A549 (cell line): ENCODE measurements at regions of chr18 and their contacts with region 1.

Region 1: DNA sequence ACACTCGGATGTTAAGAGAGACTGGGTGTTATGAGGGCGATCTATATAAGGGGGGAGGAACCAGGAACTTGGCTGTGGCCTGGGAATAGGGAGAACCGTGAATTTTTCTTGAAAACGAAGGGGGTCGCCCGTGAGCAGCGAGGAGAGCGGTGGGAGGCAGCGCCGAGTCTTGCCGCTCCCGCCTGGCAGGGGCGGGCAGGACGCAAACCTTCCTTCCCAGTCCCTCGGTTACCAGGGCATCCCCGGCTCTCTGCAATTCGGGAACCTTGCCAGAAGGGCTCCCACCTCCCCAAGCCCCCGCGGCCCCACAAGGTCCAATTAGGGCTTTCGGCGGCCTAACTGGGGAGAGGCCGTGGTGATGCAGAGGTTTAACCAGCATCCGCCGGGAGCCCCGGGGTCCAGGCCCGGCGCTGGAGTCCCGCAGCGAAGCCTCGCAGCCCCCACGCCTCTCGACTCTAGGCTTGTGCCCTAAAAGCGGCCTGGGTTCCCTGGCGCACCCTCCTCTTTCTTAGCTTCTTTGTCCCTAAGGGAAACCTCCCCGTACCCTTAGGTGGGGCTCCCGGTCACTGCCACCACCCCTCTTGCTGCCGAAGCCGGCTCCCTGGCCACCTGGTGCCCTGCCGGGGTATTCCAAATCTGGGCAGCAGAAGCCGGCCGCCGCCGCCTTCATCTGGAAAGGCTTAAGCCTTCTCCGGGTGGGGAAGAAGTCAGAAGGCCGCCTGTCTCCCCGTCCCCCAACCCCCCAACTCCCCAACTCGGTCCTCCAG is 680 bp upstream of the FHOD3 start:
- DNase-seq: peak; percentile 46 to 74
- ATAC-seq: peak; percentile 84 to 90
- H3K4me3 ChIP-seq: peak overlapping the region; percentile 67
- H3K27ac ChIP-seq: peak overlapping the region; percentile 72 to 92
- H3K4me1 ChIP-seq: no peaks in the 10 kb centered on the region
- CTCF ChIP-seq: peak; percentile 46
- EP300 ChIP-seq: no peak
- POLR2A ChIP-seq: no peak
- RAD21 ChIP-seq: peak; percentile 46 to 66

Region 2: GRCh38 chr18:36309436-36310391 is 12.9 kb after region 1 on chr18:
- CTCF ChIA-PET with region 1: no interaction called
- POLR2A ChIA-PET with region 1: interaction called, 10 read pairs
- DNase-seq: peak; percentile 42 to 64
- ATAC-seq: peak; percentile 92 to 93
- H3K4me3 ChIP-seq: no peak overlapping the region
- H3K27ac ChIP-seq: peak overlapping the region; percentile 65 to 81
- H3K4me1 ChIP-seq: peaks cover 15% of the 10 kb centered on the region
- CTCF ChIP-seq: no peak
- EP300 ChIP-seq: peak in 1 of 2 experiments; percentile 21; a peak in 1 of 5 replicates
- POLR2A ChIP-seq: no peak
- RAD21 ChIP-seq: no peak

Region 3: DNA sequence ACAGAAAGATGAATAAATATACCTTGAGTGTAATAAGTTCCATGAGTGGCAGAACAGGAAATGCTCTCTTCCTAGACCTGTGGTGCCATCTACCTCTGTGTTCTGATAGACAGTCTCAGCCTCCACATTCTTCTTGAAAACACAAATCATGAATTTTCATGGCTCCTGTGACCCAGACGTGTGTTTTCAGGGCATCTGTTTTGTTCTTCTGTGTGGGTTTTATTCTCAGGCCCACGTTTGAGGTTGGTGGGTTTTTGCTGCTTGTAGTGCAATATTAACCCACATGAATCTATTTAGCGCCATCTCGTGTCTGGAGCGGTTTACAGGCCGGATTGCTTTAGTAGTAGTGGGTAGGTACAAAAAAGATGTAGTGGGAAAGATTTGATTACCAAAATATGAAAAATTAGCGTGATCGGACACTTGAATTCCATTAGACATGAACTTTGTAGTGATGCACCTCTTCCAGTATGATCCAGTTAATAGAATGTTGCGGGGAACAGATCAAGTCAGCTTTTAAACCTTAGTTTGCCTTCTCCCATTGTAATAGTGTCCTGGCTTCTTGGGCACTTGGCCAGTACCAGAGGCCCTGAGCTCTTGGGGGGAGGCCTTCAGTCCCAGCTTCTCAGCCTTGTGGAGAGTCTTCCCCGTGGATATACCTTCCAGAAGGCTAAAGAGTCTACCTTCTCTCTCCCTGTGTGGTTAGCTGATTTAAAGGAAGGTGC is 275.5 kb after region 1 on chr18:
- CTCF ChIA-PET with region 1: interaction called, 16 read pairs
- POLR2A ChIA-PET with region 1: no interaction called
- DNase-seq: peak; percentile 5 to 28
- ATAC-seq: peak; percentile 70 to 84; a peak in 5 of 6 replicates
- H3K4me3 ChIP-seq: no peak overlapping the region
- H3K27ac ChIP-seq: no peak overlapping the region
- H3K4me1 ChIP-seq: no peaks in the 10 kb centered on the region
- CTCF ChIP-seq: peak; percentile 53
- EP300 ChIP-seq: no peak
- POLR2A ChIP-seq: no peak
- RAD21 ChIP-seq: peak; percentile 35 to 55; a peak in 4 of 5 replicates